IMR-90 (cell line): ENCODE measurements at regions of chr3 and their contacts with region 1.

Region 1: GRCh38 chr3:100400780-100401673 is at the starts of genes LNP1 and TOMM70:
- DNase-seq: peak; percentile 96
- ATAC-seq: peak; percentile 96
- H3K4me3 ChIP-seq: peak within 1 kb of the TSS; percentile 60
- H3K27ac ChIP-seq: peak within 1 kb of the TSS; percentile 98
- H3K4me1 ChIP-seq: no peaks in the 10 kb centered on the region
- H3K27me3 ChIP-seq: no peaks in the 10 kb centered on the region
- CTCF ChIP-seq: no peak
- POLR2A ChIP-seq: peak; percentile 94
- RAD21 ChIP-seq: no peak
- total RNA-seq, gene LNP1: 2.2 and 4.4 TPM in 2 replicates
- total RNA-seq, gene TOMM70: 35.1 and 50.0 TPM in 2 replicates

Region 2: GRCh38 chr3:99699841-99700240 is 701.2 kb before region 1 on chr3:
- CTCF ChIA-PET with region 1: no interaction called
- POLR2A ChIA-PET with region 1: interaction called, 13 read pairs
- dilution Hi-C with region 1: no loop called
- in situ Hi-C with region 1: no loop called
- intact Hi-C with region 1: no loop called
- DNase-seq: peak; percentile 78
- ATAC-seq: peak; percentile 85
- H3K4me3 ChIP-seq: no peak overlapping the region
- H3K27ac ChIP-seq: no peak overlapping the region
- H3K4me1 ChIP-seq: peaks cover 12% of the 10 kb centered on the region
- H3K27me3 ChIP-seq: no peaks in the 10 kb centered on the region
- CTCF ChIP-seq: no peak
- POLR2A ChIP-seq: no peak
- RAD21 ChIP-seq: no peak

Region 3: GRCh38 chr3:100080573-100080972 is 320.5 kb before region 1 on chr3:
- CTCF ChIA-PET with region 1: no interaction called
- POLR2A ChIA-PET with region 1: no interaction called
- dilution Hi-C with region 1: no loop called
- in situ Hi-C with region 1: no loop called
- intact Hi-C with region 1: loop called (anchors 5 kb)
- DNase-seq: peak; percentile 51
- ATAC-seq: no peak
- H3K4me3 ChIP-seq: no peak overlapping the region
- H3K27ac ChIP-seq: no peak overlapping the region
- H3K4me1 ChIP-seq: peaks cover 20% of the 10 kb centered on the region
- H3K27me3 ChIP-seq: no peaks in the 10 kb centered on the region
- CTCF ChIP-seq: no peak
- POLR2A ChIP-seq: no peak
- RAD21 ChIP-seq: no peak

Region 4: DNA sequence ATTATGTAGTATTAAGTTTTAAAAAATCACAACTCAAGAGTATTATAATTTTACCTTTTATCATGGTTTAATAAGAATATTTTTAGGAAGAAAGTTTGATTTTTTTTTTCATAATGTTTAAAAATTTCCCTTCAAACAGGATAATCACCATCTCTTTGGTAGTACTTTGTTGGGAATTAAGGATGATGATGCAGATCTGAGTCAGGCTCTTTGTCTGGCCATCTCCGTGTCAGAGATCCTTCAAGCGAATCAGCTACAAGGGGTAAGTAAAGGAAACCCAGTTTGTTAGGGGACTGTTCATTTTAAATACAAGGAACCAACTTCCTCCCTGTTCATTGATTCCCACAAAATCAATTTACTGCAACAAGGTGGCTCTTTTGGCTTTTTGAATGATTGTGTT is 103.2 kb before region 1 on chr3:
- CTCF ChIA-PET with region 1: no interaction called
- POLR2A ChIA-PET with region 1: interaction called, 15 read pairs
- dilution Hi-C with region 1: no loop called
- in situ Hi-C with region 1: no loop called
- intact Hi-C with region 1: no loop called
- DNase-seq: peak; percentile 67
- ATAC-seq: peak; percentile 54; the same call in 1 of the 2 replicates
- H3K4me3 ChIP-seq: no peak overlapping the region
- H3K27ac ChIP-seq: no peak overlapping the region
- H3K4me1 ChIP-seq: no peaks in the 10 kb centered on the region
- H3K27me3 ChIP-seq: no peaks in the 10 kb centered on the region
- CTCF ChIP-seq: no peak
- POLR2A ChIP-seq: no peak
- RAD21 ChIP-seq: no peak

Region 5: GRCh38 chr3:100492059-100493006 is 91.3 kb after region 1 on chr3 and contains the start of gene TMEM45A:
- CTCF ChIA-PET with region 1: no interaction called
- POLR2A ChIA-PET with region 1: no interaction called
- dilution Hi-C with region 1: no loop called
- in situ Hi-C with region 1: no loop called
- intact Hi-C with region 1: loop called (anchors 5 kb)
- DNase-seq: peak; percentile 95
- ATAC-seq: peak; percentile 99
- H3K4me3 ChIP-seq: peak within 1 kb of the TSS; percentile 79
- H3K27ac ChIP-seq: peak within 1 kb of the TSS; percentile 96
- H3K4me1 ChIP-seq: peaks cover 3% of the 10 kb centered on the region; the same call in 1 of the 2 replicates
- H3K27me3 ChIP-seq: 0 out of 2 replicates have a peak, but pooled peaks cover 2% of the 10 kb centered on the region
- CTCF ChIP-seq: no peak
- POLR2A ChIP-seq: peak; percentile 96
- RAD21 ChIP-seq: no peak
- total RNA-seq, gene TMEM45A: 13.6 and 20.8 TPM in 2 replicates